ENCODE measurements at regions of chr4 and their contacts with region 1.

Region 1: GRCh38 chr4:125445525-125445924 is 130.8 kb downstream of the FAT4 start:
- DNase-seq: no peak
- H3K4me3 ChIP-seq: no peak overlapping the region
- H3K27ac ChIP-seq: peak overlapping the region in 3 of 4 donors; percentile 68 to 78 (median 76)
- H3K4me1 ChIP-seq: peaks cover 0 to 41% (median 12%) of the 10 kb centered on the region in 4 donors
- H3K27me3 ChIP-seq: no peaks in the 10 kb centered on the region
- CTCF ChIP-seq: no peak
- EP300 ChIP-seq: peak; percentile 22 to 66 (median 58)
- POLR2A ChIP-seq: no peak

Region 2: GRCh38 chr4:124060261-124060918 is 1385.1 kb before region 1 on chr4:
- intact Hi-C with region 1: no loop called
- DNase-seq: peak; percentile 88
- H3K4me3 ChIP-seq: no peak overlapping the region
- H3K27ac ChIP-seq: peak overlapping the region; percentile 61 to 74 (median 68)
- H3K4me1 ChIP-seq: peaks cover 0 to 22% (median 12%) of the 10 kb centered on the region in 4 donors
- H3K27me3 ChIP-seq: no peaks in the 10 kb centered on the region
- CTCF ChIP-seq: no peak
- EP300 ChIP-seq: peak; percentile 70 to 94 (median 78)
- POLR2A ChIP-seq: no peak

Region 3: GRCh38 chr4:125323654-125324053 is 121.9 kb before region 1 on chr4:
- intact Hi-C with region 1: loop called (anchors 5 kb)
- DNase-seq: no peak
- H3K4me3 ChIP-seq: peak overlapping the region in 3 of 4 donors; percentile 1 to 87 (median 30)
- H3K27ac ChIP-seq: peak overlapping the region in 2 of 4 donors; percentile 68
- H3K4me1 ChIP-seq: peaks cover 0 to 81% (median 58%) of the 10 kb centered on the region in 4 donors
- H3K27me3 ChIP-seq: no peaks in the 10 kb centered on the region
- CTCF ChIP-seq: no peak
- EP300 ChIP-seq: no peak
- POLR2A ChIP-seq: no peak

Region 4: DNA sequence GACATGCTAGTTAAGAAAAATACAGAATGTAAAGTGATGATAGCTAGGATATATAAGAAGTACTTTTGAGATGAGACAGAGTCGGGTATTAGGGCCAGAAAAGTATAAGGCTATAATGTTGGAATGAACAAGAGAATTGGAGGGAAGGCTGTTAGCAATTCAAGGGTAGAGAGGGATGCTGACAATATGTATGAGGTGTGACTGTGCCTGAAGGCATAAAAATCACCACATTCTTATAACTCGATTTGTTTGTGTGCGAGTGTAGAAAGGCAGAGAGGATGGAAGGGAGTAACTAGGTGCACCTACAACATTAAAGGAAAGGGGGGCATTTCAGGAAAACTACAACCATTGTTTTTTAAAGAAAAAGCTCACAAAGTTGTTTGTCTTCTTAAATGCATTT is 44.8 kb before region 1 on chr4:
- intact Hi-C with region 1: loop called (anchors 5 kb)
- DNase-seq: no peak
- H3K4me3 ChIP-seq: no peak overlapping the region
- H3K27ac ChIP-seq: peak overlapping the region in 3 of 4 donors; percentile 27 to 54 (median 51)
- H3K4me1 ChIP-seq: peaks cover 0 to 46% (median 34%) of the 10 kb centered on the region in 4 donors
- H3K27me3 ChIP-seq: no peaks in the 10 kb centered on the region
- CTCF ChIP-seq: no peak
- EP300 ChIP-seq: no peak
- POLR2A ChIP-seq: no peak

Measured in sigmoid colon (tissue), 7 donors.